ENCODE measurements at regions of chr10 and their contacts with region 1.

Region 1: DNA sequence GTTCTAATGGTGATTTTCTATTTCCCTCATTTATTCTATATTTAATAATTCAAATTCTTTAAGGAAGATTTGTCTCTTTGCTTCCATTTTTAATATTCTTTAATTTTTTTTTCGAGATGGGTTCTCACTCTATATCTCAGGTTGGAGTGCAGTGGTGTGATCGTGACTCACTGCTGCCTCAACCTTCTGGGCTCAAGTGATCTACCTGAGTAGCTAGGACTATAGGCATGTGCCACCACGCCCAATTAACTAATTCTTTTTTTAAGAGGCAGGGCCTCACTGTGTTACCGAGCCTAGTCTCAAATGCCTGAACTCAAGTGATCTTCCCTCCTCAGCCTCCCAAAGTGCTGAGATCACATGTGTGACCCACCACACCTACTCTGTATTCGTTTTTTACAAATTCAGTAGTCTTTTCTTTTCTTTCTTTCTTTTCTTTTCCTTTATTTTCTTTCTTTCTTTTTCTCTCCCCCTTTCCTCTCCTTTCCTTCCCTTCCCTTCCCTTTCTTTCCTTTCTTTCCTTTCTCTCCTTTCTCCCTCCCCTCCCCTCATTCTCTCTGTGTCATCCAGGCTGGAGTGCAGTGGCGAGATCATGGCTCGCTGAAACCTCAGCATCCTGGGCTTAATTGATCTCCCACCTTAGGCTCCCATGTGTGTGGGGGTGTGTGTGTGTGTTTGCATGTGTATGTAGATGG is 323.1 kb downstream of the ADK start:
- DNase-seq: peak; percentile 51
- ATAC-seq: peak; percentile 51
- H3K4me3 ChIP-seq: no peak overlapping the region
- H3K27ac ChIP-seq: no peak overlapping the region
- H3K4me1 ChIP-seq: no peaks in the 10 kb centered on the region
- H3K27me3 ChIP-seq: no peaks in the 10 kb centered on the region
- CTCF ChIP-seq: no peak

Region 2: DNA sequence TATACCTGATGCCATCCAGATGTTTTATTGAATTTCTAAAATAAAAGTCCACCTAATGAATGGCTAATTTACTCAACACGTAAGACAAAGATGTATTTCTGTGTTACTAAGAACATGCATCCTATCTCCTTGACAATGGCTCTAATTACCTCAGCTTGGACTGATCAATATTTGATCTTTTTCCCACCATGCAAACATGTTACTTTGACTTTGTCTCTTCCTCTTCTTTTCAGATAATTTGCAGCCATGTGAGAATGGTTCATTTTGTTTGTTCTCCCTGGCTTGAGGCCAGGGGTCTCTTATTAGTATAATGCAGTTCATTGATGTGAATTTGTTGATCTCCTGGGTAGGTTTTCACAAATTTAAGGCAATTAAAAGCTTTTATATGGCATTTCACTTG is 21.0 kb before region 1 on chr10:
- CTCF ChIA-PET with region 1: interaction called, 13 read pairs
- POLR2A ChIA-PET with region 1: no interaction called
- intact Hi-C with region 1: no loop called
- DNase-seq: no peak
- ATAC-seq: no peak
- H3K4me3 ChIP-seq: no peak overlapping the region
- H3K27ac ChIP-seq: no peak overlapping the region
- H3K4me1 ChIP-seq: no peaks in the 10 kb centered on the region
- H3K27me3 ChIP-seq: no peaks in the 10 kb centered on the region
- CTCF ChIP-seq: no peak

Region 3: GRCh38 chr10:74529205-74529604 is 55.0 kb after region 1 on chr10:
- CTCF ChIA-PET with region 1: no interaction called
- POLR2A ChIA-PET with region 1: interaction called, 11 read pairs
- intact Hi-C with region 1: no loop called
- DNase-seq: no peak
- ATAC-seq: no peak
- H3K4me3 ChIP-seq: no peak overlapping the region
- H3K27ac ChIP-seq: no peak overlapping the region
- H3K4me1 ChIP-seq: no peaks in the 10 kb centered on the region
- H3K27me3 ChIP-seq: no peaks in the 10 kb centered on the region
- CTCF ChIP-seq: no peak